CD8-positive, alpha-beta T cell (primary cell): ENCODE measurements at regions of chr17 and their contacts with region 1.

Region 1: DNA sequence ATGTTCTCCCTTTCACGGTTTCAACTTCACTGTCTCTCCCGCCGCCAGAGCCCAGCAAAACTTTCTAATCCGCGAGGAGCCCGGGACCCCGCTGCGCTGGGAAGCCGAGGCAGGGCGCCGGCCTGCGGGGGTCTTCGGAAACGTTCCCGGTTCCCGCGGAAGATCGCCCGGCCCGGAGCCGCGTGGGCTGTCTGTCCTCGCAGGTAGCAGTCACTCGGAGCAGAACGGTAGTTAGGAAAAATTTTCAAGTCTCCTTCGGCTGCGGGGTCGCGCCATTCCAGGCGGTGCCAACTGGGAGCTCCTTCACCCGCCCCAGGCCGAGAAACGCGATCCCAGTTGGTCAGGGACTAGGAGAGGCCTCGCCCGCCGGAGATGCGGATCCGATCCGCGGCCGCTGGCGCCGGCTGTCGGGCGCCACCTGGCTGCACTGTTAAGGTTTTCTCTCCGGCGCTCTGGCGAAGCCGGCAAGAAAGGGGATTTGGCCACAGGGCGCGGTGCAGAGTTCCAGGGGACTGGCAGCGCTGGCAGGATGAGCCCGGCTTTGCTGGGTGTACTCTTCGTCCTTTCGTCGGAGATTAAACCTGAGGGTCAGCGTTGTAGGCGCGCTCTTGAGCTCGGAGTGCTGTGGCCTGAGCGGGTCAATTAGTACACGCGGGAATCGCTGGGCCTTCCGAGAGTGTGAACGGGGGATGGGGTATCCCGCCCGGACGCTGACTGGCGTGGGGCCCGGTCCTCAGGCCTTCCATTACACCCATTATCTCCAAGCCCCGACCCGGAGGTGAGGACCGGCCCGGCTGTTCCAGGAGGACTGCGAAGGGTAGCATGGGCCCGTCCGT is 135.4 kb downstream of the KCNJ12 start:
- DNase-seq: peak; percentile 26 to 80 (median 66)
- ATAC-seq: peak; percentile 72
- H3K4me3 ChIP-seq: peak overlapping the region; percentile 38 to 52
- H3K4me3 Mint-ChIP-seq: peak overlapping the region; percentile 69
- H3K27ac ChIP-seq: no peak overlapping the region
- H3K27ac Mint-ChIP-seq: no peak overlapping the region
- H3K4me1 ChIP-seq: peaks cover 8% of the 10 kb centered on the region
- H3K4me1 Mint-ChIP-seq: peaks cover 10% of the 10 kb centered on the region
- H3K27me3 ChIP-seq: peaks cover 5 to 9% of the 10 kb centered on the region in 2 experiments
- H3K27me3 Mint-ChIP-seq: peaks cover 25% of the 10 kb centered on the region
- CTCF ChIP-seq: peak; percentile 88

Region 2: GRCh38 chr17:20944014-20944865 is 567.3 kb before region 1 on chr17:
- CTCF ChIA-PET with region 1: interaction called, 3 read pairs
- POLR2A ChIA-PET with region 1: no interaction called
- intact Hi-C with region 1: loop called (anchors 2 kb)
- DNase-seq: peak in 4 of 9 experiments; percentile 19 to 52 (median 38)
- ATAC-seq: no peak
- H3K4me3 ChIP-seq: no peak overlapping the region
- H3K4me3 Mint-ChIP-seq: no peak overlapping the region
- H3K27ac ChIP-seq: no peak overlapping the region
- H3K27ac Mint-ChIP-seq: no peak overlapping the region
- H3K4me1 ChIP-seq: no peaks in the 10 kb centered on the region
- H3K4me1 Mint-ChIP-seq: no peaks in the 10 kb centered on the region
- H3K27me3 ChIP-seq: no peaks in the 10 kb centered on the region
- H3K27me3 Mint-ChIP-seq: peaks cover 7% of the 10 kb centered on the region
- CTCF ChIP-seq: no peak

Region 3: DNA sequence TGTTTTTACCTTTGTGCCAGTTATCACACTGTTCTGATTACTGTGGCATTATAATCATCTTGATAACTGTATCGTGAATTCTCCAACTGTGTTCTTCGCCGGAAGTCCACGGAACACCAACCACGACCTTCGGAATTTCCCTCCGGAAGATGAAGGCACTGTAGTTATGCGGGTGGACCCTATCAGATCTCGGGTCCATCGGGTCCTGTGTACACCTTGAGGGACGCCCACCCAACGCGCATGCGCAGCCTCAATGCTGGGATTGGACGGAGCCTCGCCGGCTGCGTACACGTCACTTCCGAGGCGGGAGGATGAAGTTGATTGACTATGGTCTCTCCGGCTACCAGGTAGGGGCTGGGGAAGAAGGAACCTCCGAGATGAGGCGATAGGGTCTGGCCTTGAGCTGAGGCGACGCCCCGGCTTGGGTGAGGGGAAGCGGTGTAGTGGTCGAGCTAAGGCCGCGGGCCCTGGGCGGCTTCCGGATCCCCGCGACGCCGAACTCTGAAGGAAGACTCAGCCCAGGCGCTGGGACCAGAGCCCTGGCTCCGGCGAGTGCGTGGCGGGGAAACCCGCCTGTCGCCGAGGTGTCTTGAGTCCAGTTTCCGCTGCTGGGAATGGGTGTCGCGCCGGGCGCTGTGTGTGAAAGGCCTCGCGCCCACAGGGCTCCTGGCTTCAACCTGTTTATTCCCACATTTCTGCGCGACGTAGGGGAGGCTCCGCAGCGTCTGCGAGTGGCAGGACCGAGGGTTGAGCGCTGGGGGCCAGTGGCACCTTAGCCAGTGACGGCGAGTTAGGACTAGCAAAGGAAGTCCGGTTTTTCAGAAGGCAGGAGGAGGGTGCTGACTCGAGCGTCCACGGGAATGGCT is 384.7 kb before region 1 on chr17 and contains the start of gene DHRS7B:
- CTCF ChIA-PET with region 1: interaction called, 16 read pairs
- POLR2A ChIA-PET with region 1: no interaction called
- intact Hi-C with region 1: no loop called
- DNase-seq: peak; percentile 90 to 98 (median 97)
- ATAC-seq: peak; percentile 80
- H3K4me3 ChIP-seq: peak within 1 kb of the TSS; percentile 88 to 90
- H3K4me3 Mint-ChIP-seq: peak within 1 kb of the TSS; percentile 94
- H3K27ac ChIP-seq: peak within 1 kb of the TSS; percentile 87 to 94
- H3K27ac Mint-ChIP-seq: peak within 1 kb of the TSS; percentile 97
- H3K4me1 ChIP-seq: peaks cover 22% of the 10 kb centered on the region
- H3K4me1 Mint-ChIP-seq: peaks cover 38% of the 10 kb centered on the region
- H3K27me3 ChIP-seq: no peaks in the 10 kb centered on the region
- H3K27me3 Mint-ChIP-seq: no peaks in the 10 kb centered on the region
- CTCF ChIP-seq: no peak
- total RNA-seq, gene DHRS7B: 6.5 to 8.2 TPM

Region 4: GRCh38 chr17:21275579-21276263 is 235.9 kb before region 1 on chr17:
- CTCF ChIA-PET with region 1: interaction called, 34 read pairs
- POLR2A ChIA-PET with region 1: no interaction called
- intact Hi-C with region 1: loop called (anchors 1 kb)
- DNase-seq: peak; percentile 83 to 98 (median 94)
- ATAC-seq: peak; percentile 84
- H3K4me3 ChIP-seq: peak overlapping the region; percentile 60 to 80
- H3K4me3 Mint-ChIP-seq: peak overlapping the region; percentile 87
- H3K27ac ChIP-seq: peak overlapping the region; percentile 57 to 75
- H3K27ac Mint-ChIP-seq: peak overlapping the region; percentile 90
- H3K4me1 ChIP-seq: peaks cover 37% of the 10 kb centered on the region
- H3K4me1 Mint-ChIP-seq: peaks cover 42% of the 10 kb centered on the region
- H3K27me3 ChIP-seq: no peaks in the 10 kb centered on the region
- H3K27me3 Mint-ChIP-seq: no peaks in the 10 kb centered on the region
- CTCF ChIP-seq: no peak

Region 5: DNA sequence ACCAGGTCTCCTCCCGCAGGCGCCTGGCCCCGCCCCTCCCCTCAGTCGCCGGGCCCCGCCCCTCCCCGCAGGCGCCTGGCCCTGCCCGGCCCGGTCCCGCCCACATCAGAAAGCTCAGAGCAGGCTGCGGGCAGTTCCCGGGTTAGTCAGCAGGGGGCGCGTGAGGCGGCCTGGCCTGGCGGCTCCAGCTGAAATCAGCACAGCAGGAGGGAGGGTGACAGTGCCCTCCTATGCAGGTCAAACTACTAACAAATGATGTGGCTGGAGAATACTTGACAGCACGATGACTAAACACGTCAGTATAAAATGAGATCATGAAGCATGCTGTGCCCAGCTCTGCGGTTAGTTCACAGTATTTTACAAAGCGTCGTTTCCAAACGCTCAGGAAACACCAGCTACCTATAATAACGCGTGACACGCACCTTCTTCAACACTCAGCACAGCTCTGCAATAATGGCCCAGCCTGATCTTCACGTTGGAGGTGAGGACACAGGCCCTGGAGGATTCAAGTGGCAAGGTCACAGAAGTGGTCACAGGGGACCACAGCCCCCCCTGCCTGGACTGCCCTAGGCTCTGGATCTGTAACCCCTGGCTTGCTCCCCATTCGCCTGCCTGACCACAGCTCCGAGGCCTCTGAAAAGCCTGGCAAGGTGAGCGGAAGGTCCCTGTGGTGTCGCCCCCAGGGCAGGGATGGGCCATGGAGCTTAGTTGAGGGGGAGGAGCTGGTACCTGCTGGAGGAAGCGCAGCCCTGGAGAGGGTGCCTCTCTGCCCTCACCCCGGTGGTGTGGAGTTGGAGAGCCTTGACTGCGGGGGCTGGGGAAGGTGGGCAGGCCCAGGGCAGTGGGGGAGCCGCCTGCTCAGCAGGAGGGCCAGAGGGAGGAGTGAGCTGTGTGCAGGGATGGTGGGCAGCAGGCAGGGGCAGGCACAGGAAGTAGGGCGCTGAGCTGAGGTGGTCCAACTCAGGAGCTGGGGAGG is 54.2 kb before region 1 on chr17:
- CTCF ChIA-PET with region 1: interaction called, 63 read pairs
- POLR2A ChIA-PET with region 1: interaction called, 3 read pairs
- intact Hi-C with region 1: loop called (anchors 1 kb)
- DNase-seq: peak; percentile 81 to 97 (median 90)
- ATAC-seq: peak; percentile 91
- H3K4me3 ChIP-seq: no peak overlapping the region
- H3K4me3 Mint-ChIP-seq: peak overlapping the region; percentile 15
- H3K27ac ChIP-seq: no peak overlapping the region
- H3K27ac Mint-ChIP-seq: peak overlapping the region; percentile 86
- H3K4me1 ChIP-seq: peaks cover 20% of the 10 kb centered on the region
- H3K4me1 Mint-ChIP-seq: peaks cover 22% of the 10 kb centered on the region
- H3K27me3 ChIP-seq: no peaks in the 10 kb centered on the region
- H3K27me3 Mint-ChIP-seq: peaks cover 7% of the 10 kb centered on the region
- CTCF ChIP-seq: peak; percentile 86

Region 6: DNA sequence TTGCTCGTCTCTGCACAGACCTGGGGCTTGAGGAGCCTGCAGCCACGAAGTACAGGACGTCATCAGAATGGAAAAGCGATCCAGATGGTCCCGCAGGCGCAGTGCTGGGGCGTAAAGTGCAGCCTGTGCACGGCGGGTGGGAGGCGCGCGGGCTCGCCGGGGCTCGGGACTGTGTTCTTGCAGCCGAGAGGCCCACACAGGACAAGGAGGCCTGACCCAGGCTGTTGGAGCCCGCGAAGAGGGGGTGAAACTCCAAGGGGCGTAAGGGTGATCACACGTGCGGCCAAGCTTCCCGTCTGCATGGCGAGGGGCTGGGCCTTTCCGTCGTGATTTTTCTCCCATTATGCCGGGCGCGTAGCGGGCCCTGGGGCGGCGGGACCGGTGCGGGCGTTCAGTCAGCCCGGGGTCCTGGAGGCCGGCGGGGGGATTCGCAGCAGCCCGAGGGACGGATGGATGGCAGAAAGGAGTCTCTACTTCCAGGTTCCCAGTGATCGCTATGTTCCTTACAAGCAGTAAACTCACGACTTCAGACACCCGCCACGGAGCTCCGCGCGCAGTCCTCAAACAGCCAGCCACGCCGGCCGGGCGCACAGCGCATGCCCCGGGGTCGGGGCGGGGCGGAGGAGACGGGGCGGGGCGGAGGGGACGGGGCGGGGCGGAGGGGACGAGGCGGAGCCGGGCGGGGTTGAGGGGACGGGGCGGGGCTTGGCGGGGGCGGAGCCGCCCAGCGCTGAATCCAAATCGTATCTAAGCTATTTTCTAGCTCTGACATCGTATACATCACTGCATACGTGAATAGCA is 39.7 kb after region 1 on chr17:
- CTCF ChIA-PET with region 1: interaction called, 3 read pairs
- POLR2A ChIA-PET with region 1: no interaction called
- intact Hi-C with region 1: loop called in 1 of 2 experiments (anchors 2 kb)
- DNase-seq: peak; percentile 67 to 89 (median 81)
- ATAC-seq: peak; percentile 94
- H3K4me3 ChIP-seq: peak overlapping the region; percentile 59 to 89
- H3K4me3 Mint-ChIP-seq: peak overlapping the region; percentile 86
- H3K27ac ChIP-seq: peak overlapping the region; percentile 18 to 66
- H3K27ac Mint-ChIP-seq: no peak overlapping the region
- H3K4me1 ChIP-seq: peaks cover 28% of the 10 kb centered on the region
- H3K4me1 Mint-ChIP-seq: peaks cover 35% of the 10 kb centered on the region
- H3K27me3 ChIP-seq: no peaks in the 10 kb centered on the region
- H3K27me3 Mint-ChIP-seq: peaks cover 13% of the 10 kb centered on the region
- CTCF ChIP-seq: no peak